Naive thymus-derived CD4-positive, alpha-beta T cell (primary cell): ENCODE measurements at regions of chr10 and their contacts with region 1.

Region 1: GRCh38 chr10:30027057-30028005 is 32.1 kb downstream of the JCAD start:
- DNase-seq: peak; percentile 63 to 98 (median 95)
- ATAC-seq: peak; percentile 97
- H3K4me3 ChIP-seq: peak overlapping the region; percentile 50
- H3K4me3 Mint-ChIP-seq: peak overlapping the region; percentile 63 to 94 (median 82)
- H3K27ac ChIP-seq: no peak overlapping the region
- H3K27ac Mint-ChIP-seq: peak overlapping the region; percentile 75 to 98 (median 93)
- H3K4me1 ChIP-seq: peaks cover 27 to 29% of the 10 kb centered on the region in 2 donors
- H3K4me1 Mint-ChIP-seq: peaks cover 24 to 58% (median 40%) of the 10 kb centered on the region in 7 donors
- H3K27me3 ChIP-seq: peaks cover 8% of the 10 kb centered on the region in 2 donors
- H3K27me3 Mint-ChIP-seq: peaks cover 34 to 65% (median 53%) of the 10 kb centered on the region in 5 donors

Region 2: GRCh38 chr10:28879875-28880682 is 1147.3 kb before region 1 on chr10:
- CTCF ChIA-PET with region 1: no interaction called
- POLR2A ChIA-PET with region 1: no interaction called
- intact Hi-C with region 1: no loop called
- DNase-seq: no peak
- ATAC-seq: no peak
- H3K4me3 ChIP-seq: no peak overlapping the region
- H3K4me3 Mint-ChIP-seq: no peak overlapping the region
- H3K27ac ChIP-seq: no peak overlapping the region
- H3K27ac Mint-ChIP-seq: no peak overlapping the region
- H3K4me1 ChIP-seq: no peaks in the 10 kb centered on the region
- H3K4me1 Mint-ChIP-seq: no peaks in the 10 kb centered on the region
- H3K27me3 ChIP-seq: no peaks in the 10 kb centered on the region
- H3K27me3 Mint-ChIP-seq: peaks cover 7 to 20% (median 14%) of the 10 kb centered on the region in 5 donors

Region 3: GRCh38 chr10:29559996-29560395 is 467.3 kb before region 1 on chr10:
- CTCF ChIA-PET with region 1: no interaction called
- POLR2A ChIA-PET with region 1: no interaction called
- intact Hi-C with region 1: no loop called
- DNase-seq: no peak
- ATAC-seq: no peak
- H3K4me3 ChIP-seq: no peak overlapping the region
- H3K4me3 Mint-ChIP-seq: no peak overlapping the region
- H3K27ac ChIP-seq: no peak overlapping the region
- H3K27ac Mint-ChIP-seq: peak overlapping the region in 1 of 9 donors; percentile 9
- H3K4me1 ChIP-seq: no peaks in the 10 kb centered on the region
- H3K4me1 Mint-ChIP-seq: peaks cover 0 to 11% (median 0%) of the 10 kb centered on the region in 7 donors
- H3K27me3 ChIP-seq: no peaks in the 10 kb centered on the region
- H3K27me3 Mint-ChIP-seq: no peaks in the 10 kb centered on the region

Region 4: GRCh38 chr10:30048768-30049517 is 21.6 kb after region 1 on chr10:
- CTCF ChIA-PET with region 1: interaction called, 3 read pairs
- POLR2A ChIA-PET with region 1: no interaction called
- intact Hi-C with region 1: loop called (anchors 1 kb)
- DNase-seq: no peak
- ATAC-seq: peak; percentile 30
- H3K4me3 ChIP-seq: peak overlapping the region; percentile 19
- H3K4me3 Mint-ChIP-seq: peak overlapping the region; percentile 45 to 81 (median 74)
- H3K27ac ChIP-seq: no peak overlapping the region
- H3K27ac Mint-ChIP-seq: peak overlapping the region in 2 of 9 donors; percentile 6 to 44
- H3K4me1 ChIP-seq: peaks cover 0 to 17% of the 10 kb centered on the region in 2 donors
- H3K4me1 Mint-ChIP-seq: peaks cover 13 to 31% (median 23%) of the 10 kb centered on the region in 7 donors
- H3K27me3 ChIP-seq: peaks cover 0 to 13% of the 10 kb centered on the region in 2 donors
- H3K27me3 Mint-ChIP-seq: peaks cover 63 to 90% (median 83%) of the 10 kb centered on the region in 5 donors

Region 5: DNA sequence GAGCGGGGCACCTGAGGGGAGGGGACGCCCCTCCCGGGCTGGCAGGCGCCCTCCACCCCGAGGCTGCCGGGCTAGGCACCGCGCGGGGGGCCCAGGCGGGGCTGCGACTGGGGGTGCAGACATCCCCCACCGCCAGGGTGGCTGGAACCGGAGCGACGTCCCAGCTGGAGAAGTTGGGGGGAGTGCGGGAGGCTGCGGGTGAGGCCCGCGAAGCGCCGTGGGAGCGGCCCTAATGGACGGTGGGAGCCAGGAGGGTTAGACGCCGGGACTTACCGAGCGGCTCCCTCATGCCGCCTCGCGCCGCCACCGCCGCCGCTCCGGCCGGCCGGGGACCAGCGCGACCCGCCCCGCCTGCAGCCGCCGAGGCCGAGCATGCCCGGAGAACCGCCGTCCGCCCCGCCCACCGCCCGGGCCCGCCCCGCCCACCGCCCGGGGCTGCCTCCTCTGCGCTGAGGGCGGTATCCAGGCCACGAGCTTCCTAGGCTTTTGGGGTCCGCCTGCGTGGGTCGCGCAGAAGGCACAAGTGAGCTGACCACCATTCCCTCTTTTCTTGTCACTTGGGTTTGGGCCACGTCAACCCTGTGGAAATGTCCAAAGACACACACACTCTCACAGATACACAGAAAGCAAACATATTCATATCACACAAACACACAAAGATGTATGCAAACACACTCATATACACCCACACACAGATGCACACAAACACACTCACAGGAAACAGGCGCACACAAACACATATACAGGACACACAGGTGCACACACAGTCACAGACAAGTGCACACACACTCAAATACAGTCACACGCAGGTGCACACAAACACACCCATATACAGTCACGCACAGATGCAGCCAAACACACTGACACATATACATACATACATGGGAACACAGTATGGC is 32.1 kb after region 1 on chr10 and contains the start of gene JCAD:
- CTCF ChIA-PET with region 1: interaction called, 3 read pairs
- POLR2A ChIA-PET with region 1: no interaction called
- intact Hi-C with region 1: loop called (anchors 2 to 5 kb)
- DNase-seq: peak in 6 of 9 donors; percentile 17 to 63 (median 36)
- ATAC-seq: peak; percentile 86
- H3K4me3 ChIP-seq: peak within 1 kb of the TSS; percentile 39
- H3K4me3 Mint-ChIP-seq: peak within 1 kb of the TSS; percentile 68 to 95 (median 78)
- H3K27ac ChIP-seq: no peak within 1 kb of the TSS
- H3K27ac Mint-ChIP-seq: no peak within 1 kb of the TSS
- H3K4me1 ChIP-seq: peaks cover 5 to 12% of the 10 kb centered on the region in 2 donors
- H3K4me1 Mint-ChIP-seq: peaks cover 5 to 11% (median 6%) of the 10 kb centered on the region in 7 donors
- H3K27me3 ChIP-seq: peaks cover 5 to 23% of the 10 kb centered on the region in 2 donors
- H3K27me3 Mint-ChIP-seq: peaks cover 67 to 90% (median 83%) of the 10 kb centered on the region in 5 donors
- total RNA-seq, gene JCAD: 0.44 to 0.56 TPM in 2 of 5 experiments, not detected in the others

Region 6: DNA sequence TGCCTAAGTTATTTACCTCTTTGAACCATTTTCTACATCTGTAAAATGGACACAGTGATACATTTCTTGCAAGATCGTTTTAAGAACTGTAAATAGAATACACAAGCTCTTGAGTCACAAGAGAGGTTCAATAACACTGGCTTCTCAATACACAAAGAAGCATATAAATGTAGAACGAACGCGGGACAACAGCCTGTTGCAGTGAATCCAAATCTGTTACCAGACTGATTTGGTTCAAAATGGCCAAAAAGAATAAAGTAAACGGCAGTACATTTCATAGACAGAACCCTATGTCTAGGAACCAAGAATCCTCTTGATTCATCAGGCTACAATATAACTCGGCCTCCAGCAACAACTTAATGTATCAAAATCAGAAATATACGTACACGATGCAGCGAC is 321.0 kb after region 1 on chr10:
- CTCF ChIA-PET with region 1: no interaction called
- POLR2A ChIA-PET with region 1: interaction called, 3 read pairs
- intact Hi-C with region 1: loop called (anchors 1 kb)
- DNase-seq: no peak
- ATAC-seq: no peak
- H3K4me3 ChIP-seq: peak overlapping the region; percentile 86
- H3K4me3 Mint-ChIP-seq: peak overlapping the region; percentile 92 to 99 (median 97)
- H3K27ac ChIP-seq: peak overlapping the region; percentile 84
- H3K27ac Mint-ChIP-seq: peak overlapping the region; percentile 87 to 98 (median 92)
- H3K4me1 ChIP-seq: peaks cover 11 to 18% of the 10 kb centered on the region in 2 donors
- H3K4me1 Mint-ChIP-seq: peaks cover 40 to 63% (median 55%) of the 10 kb centered on the region in 7 donors
- H3K27me3 ChIP-seq: no peaks in the 10 kb centered on the region
- H3K27me3 Mint-ChIP-seq: peaks cover 0 to 5% (median 0%) of the 10 kb centered on the region in 5 donors